Endothelial cell of umbilical vein (primary cell): ENCODE measurements at regions of chr1 and their contacts with region 1.

Region 1: DNA sequence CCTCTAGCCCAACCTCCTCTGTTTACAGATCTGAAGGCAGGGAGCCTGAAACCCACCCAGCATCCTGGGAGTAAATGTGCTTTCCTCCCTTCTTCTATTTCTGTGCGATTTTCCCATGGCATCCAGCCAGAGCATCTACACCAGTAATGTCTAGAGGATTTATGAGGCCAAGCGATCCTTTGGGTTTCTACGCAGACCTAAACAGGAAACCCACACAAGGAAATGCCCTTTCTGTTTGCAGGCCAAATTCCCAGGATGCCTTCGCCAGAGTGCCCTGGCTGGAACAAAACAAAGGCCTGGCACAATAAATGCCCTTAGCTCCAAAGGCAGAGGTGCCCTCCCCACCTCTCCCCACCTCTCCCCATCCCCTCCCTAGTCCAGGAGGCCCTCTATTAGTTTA is 110.5 kb upstream of the CDC42BPA start:
- DNase-seq: peak; percentile 98
- H3K4me3 ChIP-seq: peak overlapping the region in 1 of 3 experiments; percentile 6
- H3K27ac ChIP-seq: peak overlapping the region; percentile 99
- H3K4me1 ChIP-seq: peaks cover 55% of the 10 kb centered on the region
- H3K27me3 ChIP-seq: no peaks in the 10 kb centered on the region
- CTCF ChIP-seq: no peak
- POLR2A ChIP-seq: peak; percentile 40

Region 2: DNA sequence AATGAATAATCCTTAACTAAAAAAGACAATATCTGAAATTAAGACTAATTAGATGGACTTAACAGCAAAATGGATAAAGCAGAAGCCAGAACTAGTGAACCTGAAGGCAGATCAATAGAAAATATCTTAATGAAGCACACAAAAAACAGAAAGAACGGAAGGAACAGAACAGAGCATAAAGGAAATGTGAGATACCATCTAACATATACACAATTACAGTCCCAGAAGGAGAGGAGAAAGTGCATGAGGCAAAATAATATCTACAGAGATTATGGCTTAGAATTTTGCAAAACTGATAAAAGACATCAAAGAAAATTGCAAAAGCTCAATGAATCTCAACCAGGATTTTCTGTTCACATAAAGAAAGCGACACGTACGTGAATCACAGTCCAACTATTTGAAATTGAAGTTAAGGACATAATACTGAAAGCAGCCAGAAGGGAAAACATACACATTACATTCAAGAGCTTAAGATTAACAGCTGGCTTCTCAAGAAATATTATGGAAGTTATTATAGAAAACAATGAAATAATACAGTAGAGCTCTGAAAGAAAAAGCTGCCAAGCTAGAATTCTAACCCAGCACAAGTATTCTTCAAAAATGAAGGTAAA is 292.5 kb before region 1 on chr1:
- CTCF ChIA-PET with region 1: no interaction called
- POLR2A ChIA-PET with region 1: no interaction called
- dilution Hi-C with region 1: no loop called
- intact Hi-C with region 1: loop called (anchors 1 kb)
- DNase-seq: peak; percentile 57
- H3K4me3 ChIP-seq: peak overlapping the region in 2 of 3 experiments; percentile 31 to 62
- H3K27ac ChIP-seq: peak overlapping the region; percentile 71
- H3K4me1 ChIP-seq: peaks cover 38% of the 10 kb centered on the region
- H3K27me3 ChIP-seq: no peaks in the 10 kb centered on the region
- CTCF ChIP-seq: no peak
- POLR2A ChIP-seq: no peak

Region 3: DNA sequence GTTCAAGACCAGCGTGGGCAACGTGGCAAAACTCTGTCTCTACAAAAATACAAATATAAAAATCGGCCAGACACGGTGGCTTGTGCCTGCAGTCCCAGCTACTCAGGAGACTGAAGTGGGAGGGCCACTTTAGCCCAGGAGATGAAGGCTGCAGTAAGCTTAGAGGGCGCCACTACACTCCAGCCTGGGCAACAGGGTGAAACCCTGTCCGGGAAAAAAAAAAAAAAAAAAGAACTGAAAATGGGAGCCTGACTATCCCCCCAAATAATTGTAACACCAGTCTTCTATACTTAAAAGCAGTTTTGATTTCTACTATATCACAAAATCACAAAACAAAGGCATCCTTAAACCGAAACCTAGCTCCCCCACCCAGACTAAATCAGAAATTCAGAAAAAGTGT is 170.8 kb before region 1 on chr1:
- CTCF ChIA-PET with region 1: no interaction called
- POLR2A ChIA-PET with region 1: no interaction called
- dilution Hi-C with region 1: no loop called
- intact Hi-C with region 1: no loop called
- DNase-seq: no peak
- H3K4me3 ChIP-seq: no peak overlapping the region
- H3K27ac ChIP-seq: no peak overlapping the region
- H3K4me1 ChIP-seq: no peaks in the 10 kb centered on the region
- H3K27me3 ChIP-seq: no peaks in the 10 kb centered on the region
- CTCF ChIP-seq: no peak
- POLR2A ChIP-seq: no peak

Region 4: DNA sequence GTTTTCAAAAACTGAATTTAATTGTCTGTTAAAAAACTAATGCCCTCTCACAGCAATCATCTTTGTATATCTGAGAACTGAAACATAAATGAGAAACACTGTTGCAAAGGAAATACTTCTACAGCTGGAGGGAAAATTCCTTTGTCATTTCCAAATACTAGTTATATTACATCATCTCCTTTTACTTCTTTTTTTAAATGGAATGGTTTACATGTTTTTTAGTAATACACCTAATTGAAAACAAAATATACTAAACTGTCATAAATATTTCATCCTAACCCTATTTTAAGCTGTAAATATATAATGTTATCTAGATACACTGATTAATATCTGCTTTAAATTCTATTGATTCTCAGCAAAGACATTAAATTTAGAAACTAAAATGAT is 129.6 kb before region 1 on chr1:
- CTCF ChIA-PET with region 1: no interaction called
- POLR2A ChIA-PET with region 1: interaction called, 3 read pairs
- dilution Hi-C with region 1: loop called (anchors 25 kb)
- intact Hi-C with region 1: loop called (anchors 1 kb)
- DNase-seq: peak; percentile 75
- H3K4me3 ChIP-seq: peak overlapping the region in 1 of 3 experiments; percentile 61
- H3K27ac ChIP-seq: peak overlapping the region; percentile 83
- H3K4me1 ChIP-seq: peaks cover 20% of the 10 kb centered on the region
- H3K27me3 ChIP-seq: no peaks in the 10 kb centered on the region
- CTCF ChIP-seq: no peak
- POLR2A ChIP-seq: no peak

Region 5: DNA sequence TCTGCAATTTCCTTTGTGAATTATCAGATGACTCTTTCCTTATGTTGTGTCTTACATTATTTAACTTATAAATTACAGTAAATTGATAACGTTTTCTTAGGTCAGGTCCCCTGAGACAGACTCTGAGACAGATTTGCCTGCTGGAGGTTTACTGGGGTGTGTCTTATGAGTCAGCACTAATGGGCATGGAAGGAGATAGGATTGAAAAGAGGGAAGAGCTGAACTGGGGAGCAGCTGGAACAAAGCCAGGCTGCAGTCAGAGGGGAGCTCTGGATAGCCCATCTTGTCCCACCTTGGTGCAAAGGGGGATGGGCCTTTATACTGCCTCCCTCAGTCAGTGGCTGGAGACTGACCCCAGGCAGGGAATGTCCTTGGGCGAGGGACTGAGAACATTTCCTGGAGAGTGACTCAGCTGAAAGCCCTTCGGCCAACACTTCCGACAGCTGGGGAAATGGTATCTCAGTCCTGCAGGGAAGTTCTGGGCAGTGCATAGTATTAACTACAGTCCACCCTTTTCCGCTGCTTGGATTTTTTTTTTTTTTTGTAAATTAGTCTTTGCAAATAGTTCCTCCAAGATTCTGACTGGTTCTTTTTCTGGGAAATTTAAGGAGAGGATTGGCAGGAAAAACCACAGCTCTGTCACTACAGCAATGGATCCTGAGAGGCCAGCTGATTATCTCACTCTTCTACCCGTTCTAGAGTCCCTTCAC is 71.5 kb before region 1 on chr1:
- CTCF ChIA-PET with region 1: interaction called, 20 read pairs
- POLR2A ChIA-PET with region 1: interaction called, 15 read pairs
- dilution Hi-C with region 1: no loop called
- intact Hi-C with region 1: loop called (anchors 1 kb)
- DNase-seq: peak; percentile 96
- H3K4me3 ChIP-seq: peak overlapping the region in 1 of 3 experiments; percentile 36
- H3K27ac ChIP-seq: peak overlapping the region; percentile 96
- H3K4me1 ChIP-seq: peaks cover 37% of the 10 kb centered on the region
- H3K27me3 ChIP-seq: no peaks in the 10 kb centered on the region
- CTCF ChIP-seq: no peak
- POLR2A ChIP-seq: peak; percentile 77

Region 6: GRCh38 chr1:227396539-227397353 is 32.1 kb before region 1 on chr1:
- CTCF ChIA-PET with region 1: interaction called, 3 read pairs
- POLR2A ChIA-PET with region 1: no interaction called
- dilution Hi-C with region 1: no loop called
- intact Hi-C with region 1: loop called (anchors 2 kb)
- DNase-seq: no peak
- H3K4me3 ChIP-seq: no peak overlapping the region
- H3K27ac ChIP-seq: no peak overlapping the region
- H3K4me1 ChIP-seq: peaks cover 16% of the 10 kb centered on the region
- H3K27me3 ChIP-seq: no peaks in the 10 kb centered on the region
- CTCF ChIP-seq: no peak
- POLR2A ChIP-seq: no peak

Region 7: GRCh38 chr1:227886993-227887696 is 458.3 kb after region 1 on chr1:
- CTCF ChIA-PET with region 1: no interaction called
- POLR2A ChIA-PET with region 1: no interaction called
- dilution Hi-C with region 1: no loop called
- intact Hi-C with region 1: no loop called
- DNase-seq: peak; percentile 41
- H3K4me3 ChIP-seq: peak overlapping the region in 1 of 3 experiments; percentile 31
- H3K27ac ChIP-seq: no peak overlapping the region
- H3K4me1 ChIP-seq: no peaks in the 10 kb centered on the region
- H3K27me3 ChIP-seq: no peaks in the 10 kb centered on the region
- CTCF ChIP-seq: no peak
- POLR2A ChIP-seq: no peak